Thyroid gland (tissue), 4 donors: ENCODE measurements at regions of chr13 and their contacts with region 1.

Region 1: GRCh38 chr13:75876360-75877050 is 240.4 kb downstream of the LMO7 start:
- DNase-seq: peak; percentile 56 to 62
- H3K4me3 ChIP-seq: no peak overlapping the region
- H3K27ac ChIP-seq: no peak overlapping the region
- H3K4me1 ChIP-seq: no peaks in the 10 kb centered on the region
- H3K27me3 ChIP-seq: no peaks in the 10 kb centered on the region
- CTCF ChIP-seq: peak; percentile 73 to 91 (median 85)
- POLR2A ChIP-seq: no peak

Region 2: DNA sequence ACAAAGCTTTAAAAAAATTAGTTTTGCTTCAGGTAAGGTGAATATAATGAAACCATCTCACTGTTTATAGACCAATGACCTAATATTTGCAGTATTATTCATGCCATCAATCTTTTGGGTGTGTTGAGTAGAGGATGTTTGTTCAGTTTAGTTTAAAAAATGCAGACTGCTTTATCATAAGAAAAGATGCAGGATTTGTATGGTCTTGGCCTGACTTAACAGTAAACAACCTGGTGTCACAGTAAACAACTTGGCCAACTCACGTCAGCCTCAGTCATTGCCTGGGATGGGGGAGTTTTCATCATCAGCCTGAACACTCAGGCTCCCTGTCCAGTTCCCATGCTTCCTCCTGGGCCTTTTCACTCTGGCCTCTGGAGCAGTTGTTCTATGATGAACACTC is 185.3 kb before region 1 on chr13:
- intact Hi-C with region 1: loop called (anchors 10 kb)
- DNase-seq: no peak
- H3K4me3 ChIP-seq: no peak overlapping the region
- H3K27ac ChIP-seq: no peak overlapping the region
- H3K4me1 ChIP-seq: peaks cover 6 to 20% of the 10 kb centered on the region in 2 donors
- H3K27me3 ChIP-seq: no peaks in the 10 kb centered on the region
- CTCF ChIP-seq: no peak
- POLR2A ChIP-seq: no peak

Region 3: GRCh38 chr13:75968103-75968838 is 91.8 kb after region 1 on chr13:
- intact Hi-C with region 1: no loop called
- DNase-seq: no peak
- H3K4me3 ChIP-seq: no peak overlapping the region
- H3K27ac ChIP-seq: no peak overlapping the region
- H3K4me1 ChIP-seq: no peaks in the 10 kb centered on the region
- H3K27me3 ChIP-seq: no peaks in the 10 kb centered on the region
- CTCF ChIP-seq: no peak
- POLR2A ChIP-seq: no peak

Region 4: DNA sequence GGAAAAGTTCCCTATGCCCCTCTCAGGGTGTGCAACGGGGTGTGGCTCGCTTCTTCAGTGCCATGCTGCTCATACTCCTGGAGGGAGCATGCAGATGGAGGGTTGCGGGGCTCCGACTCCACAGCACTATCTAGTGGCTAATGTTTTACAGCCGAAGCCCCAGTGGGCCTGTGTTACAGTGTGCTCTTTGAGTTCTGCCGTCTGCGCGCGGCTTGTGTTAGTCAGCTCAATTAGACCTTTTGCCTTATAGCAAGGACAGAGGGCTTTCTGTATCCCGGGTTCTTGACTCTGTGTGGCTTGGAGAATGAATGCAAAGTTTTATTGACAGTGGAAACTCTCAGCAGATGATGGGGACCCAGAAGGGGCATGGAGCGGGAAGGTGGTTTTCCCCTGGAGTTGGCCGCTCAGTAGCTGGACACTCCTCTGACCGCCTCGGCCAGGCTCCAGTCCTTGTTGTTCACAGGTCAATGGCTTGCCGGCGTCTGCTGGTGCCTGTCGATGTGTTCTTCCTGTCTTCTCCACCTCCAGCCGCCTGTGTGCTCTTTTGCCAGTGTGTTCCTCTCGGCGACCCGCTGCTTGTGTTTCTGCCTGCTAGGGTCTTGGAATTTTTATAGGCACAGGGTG is 143.0 kb after region 1 on chr13:
- intact Hi-C with region 1: loop called (anchors 10 kb)
- DNase-seq: no peak
- H3K4me3 ChIP-seq: no peak overlapping the region
- H3K27ac ChIP-seq: no peak overlapping the region
- H3K4me1 ChIP-seq: peaks cover 0 to 1% of the 10 kb centered on the region in 2 donors
- H3K27me3 ChIP-seq: no peaks in the 10 kb centered on the region
- CTCF ChIP-seq: no peak
- POLR2A ChIP-seq: no peak

Region 5: DNA sequence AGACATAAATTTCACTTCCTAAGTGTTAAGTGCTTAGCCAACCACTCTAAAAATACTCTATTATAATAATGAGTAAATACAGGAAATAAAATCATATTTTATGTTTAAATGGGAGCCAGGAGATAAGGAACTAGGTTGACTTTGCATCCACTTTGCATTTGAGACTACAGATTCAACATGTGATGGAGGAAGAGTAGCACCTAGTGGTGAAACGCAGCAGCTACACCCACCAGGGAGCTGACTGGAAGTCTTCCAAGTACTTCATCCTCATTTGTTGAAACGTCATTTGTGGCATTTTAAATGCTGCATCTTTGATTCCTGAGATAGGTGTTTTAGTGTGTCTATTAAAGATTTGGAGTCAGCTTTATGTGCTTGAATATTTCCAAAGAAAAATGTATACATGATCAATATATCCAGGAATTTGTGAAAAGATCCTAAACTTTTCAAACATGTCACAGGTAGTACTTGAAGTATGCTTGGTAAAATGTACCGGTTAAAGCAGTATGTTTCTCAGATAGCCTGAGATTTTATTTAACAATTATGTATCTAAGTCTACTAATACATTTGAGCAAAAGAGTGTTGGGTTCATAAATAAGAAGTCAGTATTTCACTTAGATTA is 1027.1 kb after region 1 on chr13:
- intact Hi-C with region 1: loop called (anchors 10 kb)
- DNase-seq: peak; percentile 56 to 58
- H3K4me3 ChIP-seq: no peak overlapping the region
- H3K27ac ChIP-seq: no peak overlapping the region
- H3K4me1 ChIP-seq: no peaks in the 10 kb centered on the region
- H3K27me3 ChIP-seq: no peaks in the 10 kb centered on the region
- CTCF ChIP-seq: peak; percentile 90 to 97 (median 92)
- POLR2A ChIP-seq: no peak